Common myeloid progenitor, CD34-positive (primary cell): ENCODE measurements at regions of chr16 and their contacts with region 1.

Region 1: GRCh38 chr16:11283820-11284248 is 2.7 kb upstream of the PRM1 start:
- DNase-seq: peak in 1 of 3 donors; percentile 22
- H3K4me3 ChIP-seq: no peak overlapping the region
- H3K27ac ChIP-seq: no peak overlapping the region
- H3K4me1 ChIP-seq: peaks cover 5 to 10% (median 8%) of the 10 kb centered on the region in 4 experiments
- H3K27me3 ChIP-seq: peaks cover 0 to 3% (median 0%) of the 10 kb centered on the region in 5 experiments

Region 2: DNA sequence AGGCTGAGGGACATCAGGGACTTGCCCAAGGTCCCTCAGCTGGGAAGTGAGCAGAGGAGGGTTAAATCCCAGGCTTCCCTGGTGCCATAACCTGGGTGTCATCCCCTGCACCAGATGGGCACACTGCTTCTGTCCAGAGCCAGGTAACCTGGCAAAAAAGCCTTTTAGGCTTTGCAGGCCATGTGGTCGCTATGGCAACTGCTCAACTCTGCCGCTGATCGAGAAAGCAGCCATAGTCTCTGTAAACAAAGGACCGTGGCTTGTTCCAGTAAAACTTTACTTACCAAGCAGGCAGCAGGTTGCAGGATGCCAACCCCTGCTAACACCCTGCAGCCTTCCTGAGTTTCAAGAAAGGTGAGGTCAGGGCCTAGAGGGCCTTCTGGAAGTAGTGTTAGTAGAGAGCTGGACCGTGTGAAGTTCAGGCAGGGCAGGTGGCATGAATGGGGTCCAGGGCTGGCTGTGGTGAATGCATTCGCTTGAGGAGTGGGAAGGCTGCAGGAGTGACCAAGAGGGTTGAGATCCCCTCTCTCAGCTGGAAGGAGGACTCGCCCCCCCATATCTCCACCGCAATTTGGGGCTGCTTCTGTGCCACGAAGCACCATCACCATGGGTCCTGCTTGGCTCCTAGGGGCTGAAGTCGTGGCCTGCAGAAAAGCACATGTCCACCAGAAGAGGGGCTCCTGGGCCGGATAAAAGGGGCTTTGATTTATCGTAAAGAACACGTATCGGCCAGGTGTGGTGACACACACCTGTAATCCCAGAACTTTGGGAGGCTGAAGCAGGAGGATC is 119.2 kb before region 1 on chr16:
- CTCF ChIA-PET with region 1: no interaction called
- POLR2A ChIA-PET with region 1: no interaction called
- DNase-seq: no peak
- H3K4me3 ChIP-seq: no peak overlapping the region
- H3K27ac ChIP-seq: no peak overlapping the region
- H3K4me1 ChIP-seq: peaks cover 0 to 20% (median 0%) of the 10 kb centered on the region in 4 experiments
- H3K27me3 ChIP-seq: no peaks in the 10 kb centered on the region

Region 3: DNA sequence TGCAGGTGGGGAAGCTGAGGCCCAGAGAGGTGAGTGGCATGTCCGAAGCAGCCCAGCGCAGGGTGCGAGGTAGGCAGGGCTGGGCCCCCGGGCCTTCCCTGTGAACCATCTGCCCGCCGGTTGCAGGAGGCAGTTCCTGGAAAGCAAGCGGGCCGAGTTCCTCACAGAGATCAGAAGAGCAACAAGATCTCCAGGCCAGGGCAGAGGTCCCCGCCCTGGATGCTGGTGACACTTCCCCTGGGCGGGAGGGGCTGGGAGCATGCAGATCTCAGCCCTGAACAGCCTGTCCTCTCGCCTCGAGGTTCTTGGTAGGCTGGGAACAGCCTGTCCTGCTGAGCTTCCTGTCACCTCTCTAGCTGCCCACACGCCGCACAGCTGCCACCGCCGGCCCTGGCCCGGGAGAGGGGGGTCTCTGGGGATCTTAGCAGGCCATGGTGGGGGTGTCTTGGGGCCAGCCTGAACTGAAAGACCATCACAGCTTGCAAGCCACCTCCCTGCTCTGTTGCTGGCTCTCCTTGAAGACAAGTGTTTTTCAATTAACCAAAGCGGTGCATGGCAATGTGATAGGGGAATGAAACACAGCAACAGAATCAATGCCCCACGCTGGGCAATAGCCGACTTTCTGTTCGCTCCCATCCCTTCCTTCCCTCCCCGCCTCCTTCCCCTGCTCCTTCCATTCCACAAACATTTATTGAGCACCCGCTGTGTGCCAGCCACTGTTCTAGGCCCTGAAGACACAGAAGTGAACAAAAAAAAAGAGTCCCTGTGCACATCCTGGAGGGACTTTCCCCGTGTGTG is 59.5 kb before region 1 on chr16:
- CTCF ChIA-PET with region 1: no interaction called
- POLR2A ChIA-PET with region 1: no interaction called
- DNase-seq: peak; percentile 58 to 86 (median 82)
- H3K4me3 ChIP-seq: peak overlapping the region in 3 of 7 experiments; percentile 4 to 38 (median 19)
- H3K27ac ChIP-seq: peak overlapping the region in 1 of 2 experiments; percentile 32
- H3K4me1 ChIP-seq: peaks cover 0 to 46% (median 24%) of the 10 kb centered on the region in 4 experiments
- H3K27me3 ChIP-seq: no peaks in the 10 kb centered on the region

Region 4: GRCh38 chr16:11273721-11274324 is 10.0 kb before region 1 on chr16:
- CTCF ChIA-PET with region 1: interaction called, 13 read pairs
- POLR2A ChIA-PET with region 1: interaction called, 3 read pairs
- DNase-seq: no peak
- H3K4me3 ChIP-seq: no peak overlapping the region
- H3K27ac ChIP-seq: no peak overlapping the region
- H3K4me1 ChIP-seq: peaks cover 0 to 2% (median 1%) of the 10 kb centered on the region in 4 experiments
- H3K27me3 ChIP-seq: no peaks in the 10 kb centered on the region

Region 5: GRCh38 chr16:11297492-11298142 is 13.8 kb after region 1 on chr16:
- CTCF ChIA-PET with region 1: interaction called, 19 read pairs
- POLR2A ChIA-PET with region 1: interaction called, 3 read pairs
- DNase-seq: peak; percentile 96 to 99 (median 98)
- H3K4me3 ChIP-seq: peak overlapping the region in 4 of 7 experiments; percentile 8 to 49 (median 24)
- H3K27ac ChIP-seq: no peak overlapping the region
- H3K4me1 ChIP-seq: peaks cover 5 to 36% (median 30%) of the 10 kb centered on the region in 4 experiments
- H3K27me3 ChIP-seq: no peaks in the 10 kb centered on the region

Region 6: DNA sequence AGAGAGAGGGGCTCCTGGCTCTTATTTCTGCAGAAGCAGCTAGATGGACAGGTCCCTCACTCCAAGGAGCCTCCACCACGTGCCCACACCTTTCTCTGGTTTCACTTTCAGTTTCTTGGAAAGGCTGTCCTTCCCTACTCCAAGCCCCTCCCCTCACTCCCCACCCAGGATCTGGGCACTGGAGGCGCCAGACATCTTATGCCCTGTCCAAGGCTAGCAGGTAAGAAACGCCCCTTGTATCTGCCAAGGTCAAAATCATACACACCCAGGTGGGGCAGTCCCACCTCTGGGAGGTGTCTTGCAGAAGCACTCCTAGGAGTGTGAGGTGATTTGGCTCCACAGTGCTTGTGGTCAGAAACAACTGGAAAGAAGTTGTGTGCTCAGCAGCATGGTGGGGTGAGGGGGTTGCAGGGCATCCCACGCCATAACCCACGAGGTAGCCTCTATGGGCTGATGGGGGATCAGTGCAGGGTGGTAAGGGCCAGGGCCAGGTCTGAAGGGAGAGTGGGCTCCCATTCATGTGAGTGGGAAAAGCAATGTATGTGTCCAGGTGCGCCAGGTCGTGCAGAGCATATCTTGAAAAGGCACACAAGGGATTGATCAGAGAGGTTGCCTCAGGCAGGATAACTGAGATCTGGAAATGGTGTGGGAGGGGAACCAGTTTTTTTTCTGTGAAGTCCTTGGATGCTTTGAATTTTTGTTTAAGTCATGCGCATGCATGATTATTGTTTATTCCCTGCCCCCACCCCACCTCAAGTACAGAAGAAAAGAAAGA is 29.1 kb after region 1 on chr16:
- CTCF ChIA-PET with region 1: no interaction called
- POLR2A ChIA-PET with region 1: no interaction called
- DNase-seq: peak; percentile 43 to 78 (median 70)
- H3K4me3 ChIP-seq: no peak overlapping the region
- H3K27ac ChIP-seq: no peak overlapping the region
- H3K4me1 ChIP-seq: peaks cover 7 to 44% (median 38%) of the 10 kb centered on the region in 4 experiments
- H3K27me3 ChIP-seq: no peaks in the 10 kb centered on the region